ENCODE measurements at regions of chr14 and their contacts with region 1.

Region 1: DNA sequence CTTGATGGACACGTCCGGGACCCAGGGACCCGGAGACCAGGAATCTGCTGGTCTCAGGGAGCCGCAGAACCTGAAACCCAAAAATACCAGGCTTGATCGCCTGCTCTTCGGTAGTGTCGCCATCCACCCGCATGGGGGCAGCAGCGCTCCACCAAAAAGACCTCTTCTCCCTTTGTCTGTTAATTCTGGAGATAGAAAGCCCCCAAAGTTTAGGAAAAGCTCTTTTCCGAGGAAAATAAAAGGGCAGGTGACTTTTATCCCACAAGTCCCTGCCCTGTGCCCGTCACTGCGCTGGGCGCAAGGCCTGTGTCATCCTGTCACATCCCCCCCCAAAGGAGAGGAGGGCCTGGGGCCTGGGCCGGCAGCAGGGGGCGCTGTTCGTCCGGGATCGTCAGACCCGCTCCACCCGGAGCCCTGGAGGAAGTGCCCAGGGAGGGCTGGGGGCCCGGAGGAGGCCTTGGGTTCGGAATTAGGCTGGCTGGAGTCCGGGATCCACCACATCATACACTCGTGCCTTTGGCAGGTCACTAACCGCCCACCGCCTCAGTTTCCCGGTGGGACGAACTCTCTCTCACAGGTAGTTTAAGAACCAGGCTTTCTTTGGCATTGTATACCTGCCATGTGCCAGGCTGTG is 31.9 kb downstream of the DAD1 start:
- DNase-seq: no peak
- ATAC-seq: peak; percentile 58
- H3K4me3 ChIP-seq: peak overlapping the region; percentile 51; the same call in 1 of the 2 replicates
- H3K27ac ChIP-seq: peak overlapping the region; percentile 100
- H3K4me1 ChIP-seq: peaks cover 73% of the 10 kb centered on the region
- H3K27me3 ChIP-seq: no peaks in the 10 kb centered on the region
- CTCF ChIP-seq: peak; percentile 66 to 93 (median 86)
- EP300 ChIP-seq: no peak
- POLR2A ChIP-seq: peak; percentile 5; the same call in 1 of the 2 replicates
- RAD21 ChIP-seq: peak; percentile 74

Region 2: DNA sequence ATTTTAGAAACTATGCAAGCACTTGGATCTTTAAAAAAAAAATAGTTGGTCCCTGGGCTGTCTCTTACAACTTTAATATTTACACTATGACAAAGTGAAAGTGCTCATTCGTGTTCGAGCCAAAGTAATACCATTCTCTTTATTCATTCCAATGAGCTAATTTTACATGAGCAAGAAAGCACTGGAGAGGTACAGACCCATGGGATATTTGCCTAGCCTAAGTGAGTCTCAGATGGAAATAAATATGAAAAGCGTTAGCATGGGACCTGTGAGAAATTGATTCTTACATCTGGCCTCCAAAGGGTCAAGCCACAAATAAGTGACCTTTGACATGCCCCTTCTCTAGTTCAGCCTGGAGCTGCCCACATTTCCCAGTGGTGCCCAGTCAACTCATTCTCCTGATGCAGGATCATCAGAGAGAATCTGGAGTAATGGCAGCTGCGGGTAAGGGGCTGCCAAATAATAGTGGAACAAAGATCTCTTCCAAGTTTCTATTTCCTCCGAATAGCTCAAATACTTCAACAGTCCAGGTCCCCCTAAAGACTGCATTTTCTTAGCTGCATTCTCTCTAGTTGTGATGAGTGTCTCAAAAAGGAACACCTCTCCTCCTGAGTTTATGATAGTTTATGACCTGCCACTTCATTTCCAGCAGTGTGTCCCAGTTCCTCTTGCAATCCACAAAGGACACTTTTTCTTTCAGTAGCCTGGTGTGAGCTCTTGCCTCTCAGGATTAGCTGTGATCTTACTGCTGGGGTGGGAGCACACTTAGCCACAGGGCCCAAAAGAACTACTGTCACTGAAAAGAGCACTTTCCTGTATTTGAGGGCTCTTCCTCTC is 176.3 kb before region 1 on chr14:
- CTCF ChIA-PET with region 1: interaction called, 27 read pairs
- POLR2A ChIA-PET with region 1: interaction called, 19 read pairs
- RAD21 ChIA-PET with region 1: interaction called, 156 read pairs
- SMC1A ChIA-PET with region 1: interaction called, 34 read pairs
- in situ Hi-C with region 1: no loop called
- intact Hi-C with region 1: no loop called
- DNase-seq: no peak
- ATAC-seq: no peak
- H3K4me3 ChIP-seq: no peak overlapping the region
- H3K27ac ChIP-seq: no peak overlapping the region
- H3K4me1 ChIP-seq: peaks cover 39% of the 10 kb centered on the region
- H3K27me3 ChIP-seq: no peaks in the 10 kb centered on the region
- CTCF ChIP-seq: no peak
- EP300 ChIP-seq: no peak
- POLR2A ChIP-seq: no peak
- RAD21 ChIP-seq: no peak

Region 3: GRCh38 chr14:22483863-22484593 is 73.1 kb before region 1 on chr14:
- CTCF ChIA-PET with region 1: interaction called, 236 read pairs
- POLR2A ChIA-PET with region 1: interaction called, 36 read pairs
- RAD21 ChIA-PET with region 1: interaction called, 50 read pairs
- SMC1A ChIA-PET with region 1: interaction called, 49 read pairs
- in situ Hi-C with region 1: no loop called
- intact Hi-C with region 1: no loop called
- DNase-seq: no peak
- ATAC-seq: peak; percentile 39
- H3K4me3 ChIP-seq: peak overlapping the region; percentile 72
- H3K27ac ChIP-seq: peak overlapping the region; percentile 98
- H3K4me1 ChIP-seq: peaks cover 84% of the 10 kb centered on the region
- H3K27me3 ChIP-seq: no peaks in the 10 kb centered on the region
- CTCF ChIP-seq: no peak
- EP300 ChIP-seq: no peak
- POLR2A ChIP-seq: peak; percentile 52
- RAD21 ChIP-seq: no peak

Region 4: DNA sequence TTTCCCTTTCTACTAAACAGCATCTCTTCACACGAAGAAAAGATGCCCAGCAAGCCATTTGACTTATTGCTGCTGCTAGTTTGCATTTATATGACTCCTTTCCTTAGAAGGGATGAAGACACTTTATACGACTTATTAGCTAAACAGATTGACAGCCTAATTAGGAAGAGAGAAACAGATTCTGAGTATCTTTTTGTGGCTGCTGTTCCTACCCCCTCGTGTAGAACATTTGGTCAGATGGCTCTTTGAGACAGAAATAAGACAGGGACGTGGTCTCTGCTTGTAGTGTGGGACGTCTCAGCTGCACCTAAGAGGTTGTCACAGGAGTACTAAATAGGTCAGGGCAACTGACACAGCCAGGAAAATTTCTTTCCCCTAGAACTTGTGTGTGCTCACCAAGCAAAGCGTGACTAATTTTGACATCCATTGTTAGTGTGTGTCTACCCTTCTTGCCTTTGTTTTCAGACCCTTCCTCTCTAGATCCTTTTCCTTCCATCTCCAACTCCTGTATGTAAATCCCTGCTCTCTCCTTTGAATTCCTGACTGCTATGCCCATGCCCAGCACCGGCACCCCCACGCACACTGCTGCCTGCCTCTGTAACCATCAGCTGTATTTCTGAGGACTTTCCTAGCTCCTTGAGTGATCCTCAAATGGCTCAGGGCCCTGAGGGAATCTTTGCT is 51.3 kb before region 1 on chr14:
- CTCF ChIA-PET with region 1: interaction called, 22 read pairs
- POLR2A ChIA-PET with region 1: interaction called, 43 read pairs
- RAD21 ChIA-PET with region 1: interaction called, 64 read pairs
- SMC1A ChIA-PET with region 1: interaction called, 82 read pairs
- in situ Hi-C with region 1: no loop called
- intact Hi-C with region 1: loop called (anchors 1 kb)
- DNase-seq: no peak
- ATAC-seq: peak; percentile 29
- H3K4me3 ChIP-seq: peak overlapping the region; percentile 68
- H3K27ac ChIP-seq: peak overlapping the region; percentile 98
- H3K4me1 ChIP-seq: peaks cover 50% of the 10 kb centered on the region
- H3K27me3 ChIP-seq: no peaks in the 10 kb centered on the region
- CTCF ChIP-seq: no peak
- EP300 ChIP-seq: peak in 1 of 2 experiments; percentile 49; a peak in 1 of 4 replicates
- POLR2A ChIP-seq: peak; percentile 60; the same call in 1 of the 2 replicates
- RAD21 ChIP-seq: 0 out of 2 replicates have a peak, but pooled peaks have one; percentile 8

Region 5: DNA sequence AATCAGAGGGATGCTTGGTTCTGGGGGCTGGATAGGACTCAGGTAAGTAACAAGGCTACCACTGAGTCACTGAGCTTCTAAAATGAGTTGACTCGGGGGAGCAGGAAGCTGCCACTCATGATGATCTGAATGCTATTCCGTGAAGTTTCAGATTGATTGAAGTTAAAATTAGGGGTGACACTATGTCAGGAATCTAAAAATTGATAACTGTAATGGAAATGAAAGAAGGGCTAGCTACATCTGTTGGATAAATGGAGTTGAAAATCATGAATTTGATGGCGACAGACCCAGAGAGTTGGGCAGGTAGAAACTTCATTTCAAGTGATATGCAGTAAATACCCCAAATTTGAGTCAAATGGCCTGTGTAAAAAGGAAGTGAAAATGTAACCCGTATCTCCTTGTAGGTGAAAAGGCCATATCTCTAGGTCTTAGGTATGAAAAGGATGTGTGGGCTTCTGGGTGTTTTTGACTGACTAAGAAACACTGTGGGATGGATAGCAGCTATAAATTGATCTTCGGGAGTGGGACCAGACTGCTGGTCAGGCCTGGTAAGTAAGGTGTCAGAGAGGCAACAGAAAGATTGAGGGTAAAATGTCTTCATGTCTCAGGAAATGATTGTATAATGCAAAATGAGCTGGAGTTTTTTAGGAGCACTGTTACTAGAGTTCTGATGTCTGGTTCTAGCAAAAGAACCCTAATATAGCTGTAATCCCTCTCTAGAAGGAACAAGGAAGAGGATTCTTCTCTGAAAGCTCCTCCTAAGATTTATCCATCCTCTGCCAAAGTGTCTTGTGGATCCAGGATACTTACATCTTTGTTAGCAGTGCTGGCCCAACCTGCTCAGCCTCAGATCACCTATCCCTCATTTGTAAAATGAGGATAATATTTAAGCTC is 25.4 kb before region 1 on chr14:
- CTCF ChIA-PET with region 1: interaction called, 58 read pairs
- POLR2A ChIA-PET with region 1: interaction called, 74 read pairs
- RAD21 ChIA-PET with region 1: interaction called, 48 read pairs
- SMC1A ChIA-PET with region 1: interaction called, 105 read pairs
- in situ Hi-C with region 1: no loop called
- intact Hi-C with region 1: loop called (anchors 1 kb)
- DNase-seq: peak; percentile 93
- ATAC-seq: peak; percentile 70
- H3K4me3 ChIP-seq: peak overlapping the region; percentile 67
- H3K27ac ChIP-seq: peak overlapping the region; percentile 97
- H3K4me1 ChIP-seq: peaks cover 72% of the 10 kb centered on the region
- H3K27me3 ChIP-seq: no peaks in the 10 kb centered on the region
- CTCF ChIP-seq: no peak
- EP300 ChIP-seq: peak in 1 of 2 experiments; percentile 93; a peak in 2 of 4 replicates
- POLR2A ChIP-seq: peak; percentile 67
- RAD21 ChIP-seq: 0 out of 2 replicates have a peak, but pooled peaks have one; percentile 5